ENCODE measurements at regions of chr18 and their contacts with region 1.

Region 1: DNA sequence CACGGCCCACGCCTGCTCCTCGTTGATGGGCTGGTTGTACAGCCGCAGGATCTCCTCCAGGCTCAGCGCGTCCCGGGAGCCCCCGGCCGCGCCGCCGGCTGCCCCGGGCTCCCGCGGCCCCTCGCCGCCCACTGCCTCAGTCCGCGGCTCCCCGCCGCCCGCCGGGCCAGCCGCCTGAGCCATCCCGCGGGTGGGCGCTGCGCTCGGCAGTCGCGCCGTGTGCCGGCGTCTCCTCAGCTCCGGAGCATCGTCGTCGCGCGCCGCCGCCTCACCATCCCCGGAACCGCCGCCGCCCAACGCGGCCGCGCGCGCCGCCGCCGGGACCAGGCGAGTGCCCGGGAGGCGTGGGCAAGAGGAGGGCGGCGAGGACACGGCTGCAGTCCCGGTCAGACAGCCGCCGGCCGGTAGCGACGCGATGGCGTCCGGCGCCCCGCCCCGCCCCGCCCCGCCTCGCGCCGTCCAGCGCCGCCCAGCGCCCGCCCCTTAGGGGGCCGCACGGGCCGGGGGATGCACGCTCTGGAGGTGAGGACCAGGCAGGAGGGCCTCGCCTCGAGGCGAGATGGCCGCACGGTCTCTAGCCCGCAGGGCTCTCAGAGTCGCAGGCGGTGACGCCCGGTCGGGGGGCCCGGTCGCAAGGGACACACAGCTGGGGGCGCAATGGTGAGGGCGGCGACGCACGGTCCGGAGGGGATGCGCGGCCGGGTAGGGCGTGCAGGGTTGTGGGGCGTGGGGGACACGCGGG is at the start of gene SPIRE1:
- DNase-seq: peak; percentile 50 to 72 (median 60)
- H3K4me3 ChIP-seq: peak within 1 kb of the TSS; percentile 85
- H3K27ac ChIP-seq: peak within 1 kb of the TSS; percentile 96 to 99
- H3K4me1 ChIP-seq: peaks cover 6% of the 10 kb centered on the region
- H3K27me3 ChIP-seq: no peaks in the 10 kb centered on the region
- CTCF ChIP-seq: no peak
- EP300 ChIP-seq: no peak
- POLR2A ChIP-seq: peak; percentile 36
- total RNA-seq, gene SPIRE1: 15.3 to 30.2 (median 25.3) TPM

Region 2: DNA sequence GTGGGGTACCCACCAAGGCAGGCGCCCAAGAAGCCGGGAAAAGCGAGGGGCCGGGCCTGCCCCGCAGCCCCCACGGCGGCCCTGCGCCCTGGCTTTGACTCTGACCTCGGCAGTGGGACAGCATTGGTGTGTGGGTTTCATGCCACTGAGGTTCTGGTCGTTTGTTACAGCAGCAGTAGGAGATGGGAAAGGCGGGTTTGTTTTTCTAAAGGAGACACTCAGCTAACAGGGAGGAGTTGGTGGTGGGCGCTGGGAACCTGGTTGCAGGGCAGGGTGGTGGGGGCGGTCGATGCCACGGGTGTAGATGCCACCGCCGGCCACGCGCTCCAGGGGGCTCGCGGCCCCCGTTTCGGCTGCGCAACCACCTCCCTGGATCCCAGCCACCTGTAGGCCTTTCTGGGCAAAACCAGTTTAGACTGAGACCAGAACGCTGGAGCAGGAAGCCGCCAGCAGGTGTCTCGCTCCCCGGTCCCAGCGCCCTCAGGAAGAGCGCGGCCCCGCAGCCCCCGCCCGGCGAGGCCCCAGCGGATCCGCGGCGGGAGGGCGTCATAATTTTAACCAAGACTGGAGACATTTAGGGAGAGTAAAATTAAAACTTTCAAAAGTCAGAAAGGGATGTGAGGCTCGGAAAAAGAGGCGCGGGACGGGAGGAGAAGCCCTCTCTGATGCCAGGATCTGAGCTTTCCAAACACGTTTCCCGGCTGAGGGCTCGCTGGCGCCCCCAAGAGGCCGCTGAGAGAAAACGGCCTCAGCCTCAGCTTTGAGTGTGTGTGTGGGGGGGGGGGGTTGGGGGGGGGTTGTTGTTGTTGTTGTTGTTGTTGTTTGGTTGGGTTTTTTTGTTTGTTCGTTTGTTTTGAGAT is 386.2 kb before region 1 on chr18:
- intact Hi-C with region 1: loop called in 1 of 4 experiments (anchors 10 kb)
- DNase-seq: peak; percentile 78 to 91 (median 83)
- H3K4me3 ChIP-seq: peak overlapping the region; percentile 46
- H3K27ac ChIP-seq: peak overlapping the region in 1 of 2 donors; percentile 47
- H3K4me1 ChIP-seq: no peaks in the 10 kb centered on the region
- H3K27me3 ChIP-seq: no peaks in the 10 kb centered on the region
- CTCF ChIP-seq: peak; percentile 52 to 94 (median 81)
- EP300 ChIP-seq: peak; percentile 34
- POLR2A ChIP-seq: peak; percentile 17

Region 3: DNA sequence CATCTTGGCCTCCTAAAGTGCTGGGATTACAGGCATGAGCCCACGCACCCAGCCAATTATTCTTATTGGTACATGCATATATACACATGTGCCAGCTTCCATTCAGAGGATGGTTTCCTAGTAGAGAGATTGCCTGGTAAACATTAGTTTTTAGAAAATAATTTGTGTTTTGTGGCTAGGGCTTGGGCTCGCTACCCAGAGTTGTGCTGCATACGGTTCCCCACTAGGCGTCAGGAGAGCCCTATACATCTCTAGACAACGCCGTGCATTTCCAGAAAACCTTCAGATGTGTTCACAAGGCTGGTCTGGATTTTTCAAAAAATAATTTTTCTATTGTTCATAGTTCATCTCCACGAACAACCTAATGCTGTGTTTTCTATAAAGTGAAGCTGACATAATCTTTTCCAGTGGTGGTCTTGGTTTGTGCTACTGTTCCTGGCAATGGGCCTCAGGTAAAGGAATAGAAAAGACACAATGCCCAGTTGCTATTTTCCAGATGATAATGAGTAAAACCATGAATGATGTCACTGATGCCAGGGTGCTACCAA is 266.2 kb before region 1 on chr18:
- intact Hi-C with region 1: loop called (anchors 2 to 5 kb)
- DNase-seq: peak; percentile 50 to 74 (median 70)
- H3K4me3 ChIP-seq: no peak overlapping the region
- H3K27ac ChIP-seq: no peak overlapping the region
- H3K4me1 ChIP-seq: no peaks in the 10 kb centered on the region
- H3K27me3 ChIP-seq: no peaks in the 10 kb centered on the region
- CTCF ChIP-seq: peak; percentile 71 to 86 (median 86)
- EP300 ChIP-seq: no peak
- POLR2A ChIP-seq: no peak

Region 4: DNA sequence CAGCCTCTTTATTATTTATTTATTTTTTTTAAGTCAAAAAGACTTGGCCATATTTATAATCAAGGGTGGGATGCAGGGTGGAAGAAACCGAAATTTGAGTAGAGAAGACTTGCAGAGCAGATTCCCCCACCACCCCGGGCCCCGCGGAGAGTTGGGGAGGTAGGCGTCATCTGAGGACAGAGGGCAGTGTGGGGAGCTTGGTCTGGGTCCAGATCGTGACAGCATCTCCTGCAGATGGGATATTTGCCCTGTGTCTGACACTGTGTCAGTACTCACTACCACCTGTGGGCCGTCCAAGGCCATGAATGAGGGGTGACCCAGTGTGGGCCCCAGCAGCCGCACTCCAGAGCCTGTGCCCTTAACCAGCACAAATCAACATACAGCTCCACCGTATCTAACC is 260.6 kb before region 1 on chr18:
- intact Hi-C with region 1: loop called in 3 of 4 experiments (anchors 5 kb)
- DNase-seq: peak in 1 of 5 donors; percentile 25
- H3K4me3 ChIP-seq: no peak overlapping the region
- H3K27ac ChIP-seq: no peak overlapping the region
- H3K4me1 ChIP-seq: no peaks in the 10 kb centered on the region
- H3K27me3 ChIP-seq: no peaks in the 10 kb centered on the region
- CTCF ChIP-seq: no peak
- EP300 ChIP-seq: no peak
- POLR2A ChIP-seq: no peak